ENCODE measurements at regions of chr14 and their contacts with region 1.

Region 1: DNA sequence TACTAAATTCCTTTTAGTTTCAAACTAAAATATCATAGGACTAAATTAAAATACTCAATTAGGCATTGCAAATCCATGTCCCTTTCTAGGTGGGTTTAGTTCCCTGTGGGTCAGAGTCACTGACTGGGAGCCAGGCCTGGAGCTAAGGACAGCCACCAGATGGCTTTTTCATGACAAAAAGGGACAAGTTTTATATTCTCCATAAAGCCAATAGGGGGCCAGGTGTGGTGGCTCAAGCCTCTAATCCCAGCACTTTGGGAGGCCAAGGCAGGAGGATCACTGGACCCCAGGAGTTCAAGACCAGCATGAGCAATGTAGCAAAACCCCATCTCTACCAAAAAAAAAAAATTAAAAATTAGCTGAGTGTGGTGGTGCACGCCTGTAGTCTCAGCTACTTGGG is 35.4 kb upstream of the EIF5 start:
- DNase-seq: no peak
- H3K4me3 ChIP-seq: no peak overlapping the region
- H3K27ac ChIP-seq: no peak overlapping the region
- H3K4me1 ChIP-seq: peaks cover 52% of the 10 kb centered on the region
- H3K27me3 ChIP-seq: no peaks in the 10 kb centered on the region
- CTCF ChIP-seq: peak; percentile 51; the same call in 1 of the 2 replicates

Region 2: GRCh38 chr14:103091041-103091882 is 207.4 kb before region 1 on chr14:
- CTCF ChIA-PET with region 1: no interaction called
- POLR2A ChIA-PET with region 1: interaction called, 19 read pairs
- intact Hi-C with region 1: no loop called
- DNase-seq: peak; percentile 67 to 85
- H3K4me3 ChIP-seq: peak overlapping the region; percentile 56
- H3K27ac ChIP-seq: no peak overlapping the region
- H3K4me1 ChIP-seq: peaks cover 6% of the 10 kb centered on the region
- H3K27me3 ChIP-seq: no peaks in the 10 kb centered on the region
- CTCF ChIP-seq: peak; percentile 79

Region 3: DNA sequence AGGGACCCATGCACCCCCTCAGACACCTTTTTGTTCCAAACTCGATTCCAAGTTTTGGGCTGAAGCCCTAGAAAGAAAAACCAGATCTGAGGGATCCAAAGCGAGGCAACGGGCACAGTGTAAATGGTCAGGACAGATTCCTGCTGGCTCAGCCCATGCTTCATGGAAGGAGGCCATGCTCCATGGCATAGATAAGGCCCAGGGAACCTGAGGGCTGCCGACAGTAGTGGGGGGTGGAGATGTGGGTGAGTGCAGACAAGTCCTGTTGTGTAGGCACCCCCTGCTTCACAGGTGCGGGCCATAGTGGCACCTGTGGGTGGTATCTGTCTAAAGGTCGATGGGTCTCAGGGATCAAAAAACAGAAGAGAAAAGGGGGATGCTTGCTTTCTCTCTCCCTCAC is 133.3 kb before region 1 on chr14:
- CTCF ChIA-PET with region 1: no interaction called
- POLR2A ChIA-PET with region 1: no interaction called
- intact Hi-C with region 1: no loop called
- DNase-seq: no peak
- H3K4me3 ChIP-seq: no peak overlapping the region
- H3K27ac ChIP-seq: no peak overlapping the region
- H3K4me1 ChIP-seq: peaks cover 24% of the 10 kb centered on the region
- H3K27me3 ChIP-seq: no peaks in the 10 kb centered on the region
- CTCF ChIP-seq: no peak

Region 4: DNA sequence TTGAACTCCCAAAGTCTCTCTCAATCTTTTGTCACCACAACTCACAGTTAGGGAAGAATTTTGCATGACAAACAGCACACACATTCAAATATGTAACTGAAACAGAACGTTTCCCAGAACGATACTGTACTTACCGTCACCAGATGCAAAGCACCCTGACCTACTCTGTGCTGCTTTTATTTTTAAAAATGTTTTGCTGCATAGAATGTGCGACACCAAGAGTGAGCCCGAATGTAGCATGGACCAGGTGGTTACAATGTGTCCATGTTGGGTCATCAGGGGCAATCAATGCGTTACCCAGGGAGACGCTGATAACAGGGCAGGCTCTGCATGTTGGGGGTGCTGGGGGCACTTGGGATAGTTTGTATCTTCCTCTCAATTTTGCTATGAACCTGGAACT is 20.8 kb after region 1 on chr14:
- CTCF ChIA-PET with region 1: no interaction called
- POLR2A ChIA-PET with region 1: interaction called, 13 read pairs
- intact Hi-C with region 1: no loop called
- DNase-seq: no peak
- H3K4me3 ChIP-seq: no peak overlapping the region
- H3K27ac ChIP-seq: no peak overlapping the region
- H3K4me1 ChIP-seq: no peaks in the 10 kb centered on the region
- H3K27me3 ChIP-seq: no peaks in the 10 kb centered on the region
- CTCF ChIP-seq: no peak

Region 5: GRCh38 chr14:103391048-103391447 is 92.4 kb after region 1 on chr14:
- CTCF ChIA-PET with region 1: interaction called, 17 read pairs
- POLR2A ChIA-PET with region 1: no interaction called
- intact Hi-C with region 1: loop called (anchors 1 kb)
- DNase-seq: peak; percentile 45 to 72
- H3K4me3 ChIP-seq: no peak overlapping the region
- H3K27ac ChIP-seq: no peak overlapping the region
- H3K4me1 ChIP-seq: peaks cover 57% of the 10 kb centered on the region
- H3K27me3 ChIP-seq: no peaks in the 10 kb centered on the region
- CTCF ChIP-seq: peak; percentile 97

Region 6: GRCh38 chr14:103401223-103402214 is 102.9 kb after region 1 on chr14:
- CTCF ChIA-PET with region 1: no interaction called
- POLR2A ChIA-PET with region 1: no interaction called
- intact Hi-C with region 1: no loop called
- DNase-seq: peak in 1 of 2 experiments; percentile 22
- H3K4me3 ChIP-seq: no peak overlapping the region
- H3K27ac ChIP-seq: peak overlapping the region; percentile 63
- H3K4me1 ChIP-seq: peaks cover 59% of the 10 kb centered on the region
- H3K27me3 ChIP-seq: no peaks in the 10 kb centered on the region
- CTCF ChIP-seq: no peak